HEK293 (cell line): ENCODE measurements at regions of chr1 and their contacts with region 1.

Region 1: GRCh38 chr1:179002552-179003345 is 22.9 kb upstream of the FAM20B start:
- H3K4me3 ChIP-seq: no peak overlapping the region
- H3K27ac ChIP-seq: no peak overlapping the region
- H3K4me1 ChIP-seq: no peaks in the 10 kb centered on the region
- CTCF ChIP-seq: peak; percentile 88

Region 2: DNA sequence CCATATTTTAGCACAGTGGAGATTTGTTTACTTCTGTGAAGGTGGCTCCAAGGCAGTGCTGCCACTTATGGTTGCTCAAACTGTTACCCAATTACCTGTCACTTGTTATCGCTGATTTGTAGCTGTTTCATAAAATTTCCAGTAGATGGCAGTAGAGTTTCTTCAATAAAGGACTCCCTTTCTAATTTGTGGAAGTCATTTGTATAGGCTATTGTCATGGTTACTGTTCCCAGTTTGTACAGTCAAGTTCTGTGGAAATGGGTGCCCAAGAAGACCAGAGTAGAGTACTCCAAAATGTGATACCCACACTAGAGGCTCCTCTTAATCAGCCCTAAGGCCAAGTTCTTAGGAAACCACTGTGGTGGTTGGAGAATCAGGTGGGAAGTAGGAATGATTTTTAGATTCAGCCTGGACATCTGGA is 692.1 kb before region 1 on chr1:
- CTCF ChIA-PET with region 1: interaction called, 17 read pairs
- POLR2A ChIA-PET with region 1: interaction called, 3 read pairs
- H3K4me3 ChIP-seq: no peak overlapping the region
- H3K27ac ChIP-seq: no peak overlapping the region
- H3K4me1 ChIP-seq: no peaks in the 10 kb centered on the region
- CTCF ChIP-seq: peak; percentile 39; the same call in 1 of the 2 replicates

Region 3: GRCh38 chr1:178542560-178543356 is 460.0 kb before region 1 on chr1:
- CTCF ChIA-PET with region 1: interaction called, 34 read pairs
- POLR2A ChIA-PET with region 1: no interaction called
- H3K4me3 ChIP-seq: peak overlapping the region; percentile 79
- H3K27ac ChIP-seq: peak overlapping the region; percentile 89
- H3K4me1 ChIP-seq: no peaks in the 10 kb centered on the region
- CTCF ChIP-seq: peak; percentile 88

Region 4: GRCh38 chr1:178768423-178768822 is 234.3 kb before region 1 on chr1:
- CTCF ChIA-PET with region 1: interaction called, 87 read pairs
- POLR2A ChIA-PET with region 1: no interaction called
- H3K4me3 ChIP-seq: no peak overlapping the region
- H3K27ac ChIP-seq: no peak overlapping the region
- H3K4me1 ChIP-seq: no peaks in the 10 kb centered on the region
- CTCF ChIP-seq: peak; percentile 41; the same call in 1 of the 2 replicates

Region 5: DNA sequence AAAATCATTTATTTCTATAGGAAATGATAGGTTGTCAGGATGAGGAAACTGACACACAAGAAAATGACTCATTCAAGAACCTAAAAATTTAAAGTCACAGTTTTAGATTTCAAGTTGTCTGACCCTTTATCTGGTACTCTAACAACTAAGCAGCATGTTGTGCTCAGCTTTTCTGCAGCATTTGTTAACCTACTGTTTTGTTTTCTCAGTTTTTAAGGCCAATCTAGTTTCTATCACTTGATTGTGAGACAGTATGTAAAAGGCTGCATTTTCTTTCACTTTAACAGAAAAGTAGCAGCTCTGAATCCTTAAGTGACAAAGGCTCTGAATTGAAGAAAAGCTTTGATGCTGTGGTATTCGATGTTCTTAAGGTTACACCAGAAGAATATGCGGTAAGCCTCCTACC is 218.6 kb before region 1 on chr1:
- CTCF ChIA-PET with region 1: interaction called, 27 read pairs
- POLR2A ChIA-PET with region 1: no interaction called
- H3K4me3 ChIP-seq: no peak overlapping the region
- H3K27ac ChIP-seq: no peak overlapping the region
- H3K4me1 ChIP-seq: no peaks in the 10 kb centered on the region
- CTCF ChIP-seq: no peak